Psoas muscle (tissue), 8 donors: ENCODE measurements at regions of chr16 and their contacts with region 1.

Region 1: GRCh38 chr16:89442990-89443731 is 47.2 kb downstream of the ANKRD11 start:
- DNase-seq: peak; percentile 55 to 76
- ATAC-seq: peak; percentile 36 to 63 (median 46)
- H3K4me3 ChIP-seq: peak overlapping the region; percentile 10
- H3K27ac ChIP-seq: peak overlapping the region; percentile 83
- H3K4me1 ChIP-seq: peaks cover 93% of the 10 kb centered on the region
- H3K27me3 ChIP-seq: no peaks in the 10 kb centered on the region
- CTCF ChIP-seq: no peak

Region 2: GRCh38 chr16:89476804-89477261 is 33.7 kb after region 1 on chr16:
- intact Hi-C with region 1: loop called (anchors 5 kb)
- DNase-seq: no peak
- ATAC-seq: peak; percentile 65 to 76 (median 74)
- H3K4me3 ChIP-seq: no peak overlapping the region
- H3K27ac ChIP-seq: peak overlapping the region; percentile 79
- H3K4me1 ChIP-seq: peaks cover 82% of the 10 kb centered on the region
- H3K27me3 ChIP-seq: no peaks in the 10 kb centered on the region
- CTCF ChIP-seq: no peak

Region 3: DNA sequence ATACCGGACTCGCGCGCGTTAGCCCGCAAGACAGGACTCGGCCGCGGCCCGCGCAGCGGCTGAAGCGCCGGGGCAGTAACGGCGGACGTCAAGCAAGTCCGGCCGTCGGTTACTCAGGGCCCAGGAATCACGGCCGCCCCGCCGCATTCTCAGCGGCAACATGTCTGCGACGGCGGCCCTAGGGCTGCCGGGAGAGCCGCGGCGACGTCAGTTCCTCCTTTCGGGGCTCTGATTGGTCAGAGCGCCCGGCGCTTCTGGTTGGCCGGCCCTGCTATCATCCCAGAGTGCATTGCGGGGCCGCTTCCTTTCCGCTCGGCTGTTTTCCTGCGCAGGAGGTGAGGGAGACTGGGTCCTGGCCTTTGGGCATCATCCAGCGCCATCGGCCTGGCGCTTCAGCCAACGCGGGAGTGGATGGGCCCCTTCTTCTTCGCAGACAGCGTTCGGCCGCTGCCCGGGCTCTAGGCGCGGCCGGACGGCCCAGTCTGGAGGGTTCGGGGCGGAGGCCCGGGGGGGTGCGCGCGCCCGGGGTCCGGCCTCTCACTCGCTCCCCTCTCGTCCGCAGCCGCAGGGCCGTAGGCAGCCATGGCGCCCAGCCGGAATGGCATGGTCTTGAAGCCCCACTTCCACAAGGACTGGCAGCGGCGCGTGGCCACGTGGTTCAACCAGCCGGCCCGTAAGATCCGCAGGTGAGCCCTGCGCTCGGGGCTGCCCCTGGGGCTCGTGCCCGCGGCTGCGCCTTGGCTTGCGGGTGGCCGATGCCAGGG is 117.4 kb after region 1 on chr16 and contains the start of gene RPL13:
- intact Hi-C with region 1: no loop called
- DNase-seq: peak; percentile 96 to 98
- ATAC-seq: peak; percentile 87 to 93 (median 90)
- H3K4me3 ChIP-seq: peak within 1 kb of the TSS; percentile 94
- H3K27ac ChIP-seq: peak within 1 kb of the TSS; percentile 96
- H3K4me1 ChIP-seq: peaks cover 50% of the 10 kb centered on the region
- H3K27me3 ChIP-seq: no peaks in the 10 kb centered on the region
- CTCF ChIP-seq: peak; percentile 2
- total RNA-seq, gene RPL13: 1,039 to 1,769 (median 1,553) TPM